Psoas muscle (tissue), 8 donors: ENCODE measurements at regions of chr9 and their contacts with region 1.

Region 1: GRCh38 chr9:10806868-10807267 is 194.1 kb upstream of the PTPRD start:
- DNase-seq: no peak
- ATAC-seq: no peak
- H3K4me3 ChIP-seq: no peak overlapping the region
- H3K27ac ChIP-seq: no peak overlapping the region
- H3K4me1 ChIP-seq: no peaks in the 10 kb centered on the region
- H3K27me3 ChIP-seq: no peaks in the 10 kb centered on the region
- CTCF ChIP-seq: no peak

Region 2: GRCh38 chr9:10744669-10745068 is 62.2 kb before region 1 on chr9:
- intact Hi-C with region 1: no loop called
- DNase-seq: no peak
- ATAC-seq: no peak
- H3K4me3 ChIP-seq: no peak overlapping the region
- H3K27ac ChIP-seq: no peak overlapping the region
- H3K4me1 ChIP-seq: no peaks in the 10 kb centered on the region
- H3K27me3 ChIP-seq: no peaks in the 10 kb centered on the region
- CTCF ChIP-seq: no peak

Region 3: GRCh38 chr9:10863476-10863875 is 56.6 kb after region 1 on chr9:
- intact Hi-C with region 1: loop called in 1 of 2 experiments (anchors 10 kb)
- DNase-seq: no peak
- ATAC-seq: no peak
- H3K4me3 ChIP-seq: no peak overlapping the region
- H3K27ac ChIP-seq: no peak overlapping the region
- H3K4me1 ChIP-seq: no peaks in the 10 kb centered on the region
- H3K27me3 ChIP-seq: no peaks in the 10 kb centered on the region
- CTCF ChIP-seq: no peak

Region 4: DNA sequence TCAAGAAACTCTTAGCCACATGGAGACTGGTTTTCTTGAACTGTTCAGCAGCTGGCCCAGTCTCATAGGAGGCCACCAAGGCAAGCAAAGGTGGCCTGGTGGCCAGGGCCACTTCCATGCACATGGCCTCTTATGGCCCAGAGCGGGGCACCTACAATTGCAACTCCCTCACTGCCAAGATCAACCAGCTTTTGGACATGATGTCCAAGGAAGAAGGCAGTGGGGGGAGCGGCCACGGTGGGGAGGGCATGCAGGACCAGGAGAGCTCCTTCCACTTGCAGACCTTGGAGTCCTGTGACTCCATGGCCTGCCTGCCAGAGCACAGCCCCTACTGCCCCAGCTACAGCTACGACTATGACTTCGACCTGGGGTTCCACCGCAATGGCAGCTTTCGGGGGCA is 204.8 kb after region 1 on chr9:
- intact Hi-C with region 1: no loop called
- DNase-seq: no peak
- ATAC-seq: no peak
- H3K4me3 ChIP-seq: no peak overlapping the region
- H3K27ac ChIP-seq: no peak overlapping the region
- H3K4me1 ChIP-seq: no peaks in the 10 kb centered on the region
- H3K27me3 ChIP-seq: no peaks in the 10 kb centered on the region
- CTCF ChIP-seq: no peak